PC-3 (cell line): ENCODE measurements at regions of chr11 and their contacts with region 1.

Region 1: GRCh38 chr11:57761301-57762234 is at the start of gene CTNND1:
- DNase-seq: peak; percentile 98
- ATAC-seq: peak; percentile 90
- H3K4me3 ChIP-seq: peak within 1 kb of the TSS; percentile 79
- H3K27ac ChIP-seq: peak within 1 kb of the TSS; percentile 84
- H3K4me1 ChIP-seq: peaks cover 26% of the 10 kb centered on the region
- H3K27me3 ChIP-seq: no peaks in the 10 kb centered on the region
- CTCF ChIP-seq: no peak
- total RNA-seq, gene CTNND1: 117 and 121 TPM in 2 replicates

Region 2: DNA sequence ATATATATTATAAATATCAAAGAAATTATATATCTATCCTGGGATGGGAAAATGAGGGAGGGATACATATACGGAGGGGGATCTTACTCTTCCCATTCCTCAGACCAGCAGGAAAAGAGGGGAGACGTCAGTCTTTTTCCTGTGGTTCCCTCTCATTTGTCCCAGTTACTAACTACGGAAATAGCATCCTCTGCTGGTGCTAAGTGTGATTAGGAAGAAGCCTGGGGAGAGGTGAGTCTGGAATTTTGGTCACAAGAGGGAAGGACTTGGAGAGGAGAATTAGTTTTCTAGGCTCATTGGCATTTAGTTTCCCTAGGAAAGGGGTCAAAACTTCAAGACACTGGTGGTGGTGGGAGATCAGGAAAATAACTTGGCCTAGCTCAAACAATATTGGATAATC is 61.1 kb before region 1 on chr11:
- CTCF ChIA-PET with region 1: no interaction called
- POLR2A ChIA-PET with region 1: interaction called, 16 read pairs
- intact Hi-C with region 1: no loop called
- DNase-seq: no peak
- ATAC-seq: no peak
- H3K4me3 ChIP-seq: no peak overlapping the region
- H3K27ac ChIP-seq: no peak overlapping the region
- H3K4me1 ChIP-seq: no peaks in the 10 kb centered on the region
- H3K27me3 ChIP-seq: no peaks in the 10 kb centered on the region
- CTCF ChIP-seq: no peak

Region 3: GRCh38 chr11:57772562-57772961 is 11.0 kb after region 1 on chr11:
- CTCF ChIA-PET with region 1: interaction called, 3 read pairs
- POLR2A ChIA-PET with region 1: no interaction called
- intact Hi-C with region 1: loop called (anchors 1 kb)
- DNase-seq: peak; percentile 81
- ATAC-seq: peak; percentile 61
- H3K4me3 ChIP-seq: peak overlapping the region; percentile 49
- H3K27ac ChIP-seq: peak overlapping the region; percentile 60
- H3K4me1 ChIP-seq: peaks cover 64% of the 10 kb centered on the region
- H3K27me3 ChIP-seq: no peaks in the 10 kb centered on the region
- CTCF ChIP-seq: no peak

Region 4: DNA sequence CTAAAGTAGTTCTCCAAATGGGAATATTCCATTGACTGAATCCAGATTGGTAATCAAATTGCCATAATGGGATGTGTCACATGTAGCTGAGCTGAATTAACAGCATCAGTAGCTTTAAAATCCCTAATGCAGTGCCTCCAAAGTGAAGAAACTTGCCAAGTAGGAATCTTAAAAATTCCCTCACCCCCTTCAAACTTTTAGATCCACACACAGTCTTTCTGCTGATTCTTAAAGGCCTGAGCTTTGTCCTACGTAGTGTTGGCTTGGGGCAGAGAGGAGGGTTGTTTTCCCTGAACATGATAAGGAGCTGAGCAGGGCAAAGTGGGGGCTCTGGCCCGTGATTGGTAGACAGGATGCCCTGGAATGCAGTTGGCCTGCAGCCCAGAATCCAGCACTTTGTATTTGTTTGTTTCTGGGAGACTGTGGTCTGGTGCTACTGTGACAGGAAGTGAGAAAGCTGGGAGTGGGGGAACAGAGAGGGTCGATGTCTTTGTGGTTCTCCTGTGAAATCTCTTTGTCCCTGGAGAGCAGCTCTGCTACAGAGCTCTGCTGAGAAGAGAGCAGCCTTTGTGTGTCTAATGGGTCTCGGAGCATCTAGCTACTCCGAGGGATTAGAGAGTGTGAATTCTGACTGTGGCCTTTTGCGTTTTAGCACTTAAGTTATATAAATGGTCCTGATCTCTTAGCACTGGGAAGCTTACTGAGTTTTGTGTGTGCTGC is 16.9 kb after region 1 on chr11:
- CTCF ChIA-PET with region 1: interaction called, 8 read pairs
- POLR2A ChIA-PET with region 1: interaction called, 39 read pairs
- intact Hi-C with region 1: loop called (anchors 1 kb)
- DNase-seq: peak; percentile 99
- ATAC-seq: peak; percentile 80
- H3K4me3 ChIP-seq: peak overlapping the region; percentile 60
- H3K27ac ChIP-seq: peak overlapping the region; percentile 96
- H3K4me1 ChIP-seq: peaks cover 89% of the 10 kb centered on the region
- H3K27me3 ChIP-seq: no peaks in the 10 kb centered on the region
- CTCF ChIP-seq: no peak

Region 5: GRCh38 chr11:58394195-58394594 is 632.6 kb after region 1 on chr11:
- CTCF ChIA-PET with region 1: no interaction called
- POLR2A ChIA-PET with region 1: interaction called, 3 read pairs
- intact Hi-C with region 1: loop called (anchors 5 kb)
- DNase-seq: peak; percentile 99
- ATAC-seq: peak; percentile 65
- H3K4me3 ChIP-seq: peak overlapping the region; percentile 36; the same call in 1 of the 2 replicates
- H3K27ac ChIP-seq: peak overlapping the region; percentile 89
- H3K4me1 ChIP-seq: peaks cover 55% of the 10 kb centered on the region
- H3K27me3 ChIP-seq: no peaks in the 10 kb centered on the region
- CTCF ChIP-seq: no peak

Region 6: GRCh38 chr11:58513747-58514367 is 752.3 kb after region 1 on chr11:
- CTCF ChIA-PET with region 1: no interaction called
- POLR2A ChIA-PET with region 1: interaction called, 4 read pairs
- intact Hi-C with region 1: loop called (anchors 5 kb)
- DNase-seq: peak; percentile 92
- ATAC-seq: peak; percentile 98
- H3K4me3 ChIP-seq: no peak overlapping the region
- H3K27ac ChIP-seq: no peak overlapping the region
- H3K4me1 ChIP-seq: peaks cover 6% of the 10 kb centered on the region; the same call in 1 of the 2 replicates
- H3K27me3 ChIP-seq: no peaks in the 10 kb centered on the region
- CTCF ChIP-seq: peak; percentile 97